Activated CD4-positive, alpha-beta memory T cell treated with anti-CD3 and anti-CD28 coated beads for 36 hours (primary cell): ENCODE measurements at regions of chr2 and their contacts with region 1.

Region 1: GRCh38 chr2:159712143-159712928 is at the start of gene MARCHF7:
- DNase-seq: peak; percentile 98
- H3K4me3 Mint-ChIP-seq: peak within 1 kb of the TSS; percentile 100
- H3K27ac Mint-ChIP-seq: peak within 1 kb of the TSS; percentile 100
- H3K4me1 Mint-ChIP-seq: peaks cover 47% of the 10 kb centered on the region
- H3K27me3 Mint-ChIP-seq: no peaks in the 10 kb centered on the region
- total RNA-seq, gene MARCHF7: 84.0 to 86.7 TPM

Region 2: DNA sequence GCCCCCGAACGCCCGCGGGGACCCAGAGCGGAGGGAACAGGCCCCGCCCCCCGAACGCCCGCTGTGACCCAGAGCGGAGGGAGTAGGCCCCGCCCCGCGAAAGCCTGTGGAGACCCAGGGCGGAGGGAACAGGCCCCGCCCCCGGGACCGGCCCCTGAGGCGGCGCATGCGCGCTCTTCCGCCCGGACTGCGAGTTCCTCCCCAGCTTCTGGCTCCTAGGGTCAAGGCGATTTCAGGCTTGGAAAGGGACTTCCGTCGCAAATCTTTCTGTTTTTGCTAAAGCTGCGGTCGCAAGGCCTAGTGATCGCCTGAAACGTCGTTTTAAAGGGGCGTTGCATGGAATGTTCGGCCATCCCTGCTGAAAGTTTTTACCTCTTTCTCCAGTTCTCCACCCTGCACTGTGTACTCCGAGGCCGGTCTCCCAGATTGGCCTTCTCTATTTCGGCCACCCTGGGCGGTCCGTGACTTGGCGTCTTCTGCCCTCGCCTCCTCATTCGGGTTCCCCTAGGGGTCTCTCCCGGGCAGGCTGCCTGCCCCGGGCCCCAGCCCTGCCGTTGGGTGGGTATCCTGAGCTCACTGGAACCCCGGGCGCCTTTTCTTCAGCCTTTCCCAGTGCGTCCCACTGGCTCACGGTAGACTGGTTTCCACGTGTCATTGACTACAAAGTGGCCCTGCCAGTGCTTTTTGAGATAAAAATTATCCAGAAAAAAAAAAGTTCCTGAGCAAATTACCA is 425.5 kb before region 1 on chr2:
- CTCF ChIA-PET with region 1: interaction called, 3 read pairs
- POLR2A ChIA-PET with region 1: no interaction called
- intact Hi-C with region 1: loop called (anchors 1 kb)
- DNase-seq: peak; percentile 97
- H3K4me3 Mint-ChIP-seq: peak overlapping the region; percentile 87
- H3K27ac Mint-ChIP-seq: peak overlapping the region; percentile 63
- H3K4me1 Mint-ChIP-seq: peaks cover 20% of the 10 kb centered on the region
- H3K27me3 Mint-ChIP-seq: no peaks in the 10 kb centered on the region

Region 3: DNA sequence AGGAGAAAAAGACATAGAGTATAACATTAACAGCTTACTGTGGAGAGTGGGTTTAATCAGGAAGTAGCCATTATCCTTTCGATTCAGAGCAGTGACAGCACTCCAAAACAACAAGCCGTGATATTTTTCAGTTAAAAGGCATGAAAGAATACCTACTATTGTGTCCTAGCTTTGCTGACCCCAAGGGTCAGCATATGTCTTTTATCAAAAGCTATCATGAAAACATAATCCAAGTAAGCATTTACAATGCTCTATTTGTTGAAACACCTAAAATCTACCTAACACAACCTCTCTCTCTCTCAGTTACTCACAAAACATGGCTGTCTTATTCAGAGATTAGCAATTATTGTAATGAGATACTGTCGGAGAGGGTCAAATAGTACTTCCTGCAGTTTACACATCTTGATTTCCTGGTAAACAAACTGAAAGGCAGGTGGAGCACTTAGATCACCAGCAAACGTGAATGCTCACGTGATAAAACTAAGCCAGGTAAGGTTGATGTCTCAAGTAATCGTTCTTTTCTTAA is 196.0 kb before region 1 on chr2:
- CTCF ChIA-PET with region 1: interaction called, 4 read pairs
- POLR2A ChIA-PET with region 1: interaction called, 3 read pairs
- intact Hi-C with region 1: loop called (anchors 1 kb)
- DNase-seq: no peak
- H3K4me3 Mint-ChIP-seq: peak overlapping the region; percentile 69
- H3K27ac Mint-ChIP-seq: peak overlapping the region; percentile 59
- H3K4me1 Mint-ChIP-seq: peaks cover 27% of the 10 kb centered on the region
- H3K27me3 Mint-ChIP-seq: no peaks in the 10 kb centered on the region

Region 4: DNA sequence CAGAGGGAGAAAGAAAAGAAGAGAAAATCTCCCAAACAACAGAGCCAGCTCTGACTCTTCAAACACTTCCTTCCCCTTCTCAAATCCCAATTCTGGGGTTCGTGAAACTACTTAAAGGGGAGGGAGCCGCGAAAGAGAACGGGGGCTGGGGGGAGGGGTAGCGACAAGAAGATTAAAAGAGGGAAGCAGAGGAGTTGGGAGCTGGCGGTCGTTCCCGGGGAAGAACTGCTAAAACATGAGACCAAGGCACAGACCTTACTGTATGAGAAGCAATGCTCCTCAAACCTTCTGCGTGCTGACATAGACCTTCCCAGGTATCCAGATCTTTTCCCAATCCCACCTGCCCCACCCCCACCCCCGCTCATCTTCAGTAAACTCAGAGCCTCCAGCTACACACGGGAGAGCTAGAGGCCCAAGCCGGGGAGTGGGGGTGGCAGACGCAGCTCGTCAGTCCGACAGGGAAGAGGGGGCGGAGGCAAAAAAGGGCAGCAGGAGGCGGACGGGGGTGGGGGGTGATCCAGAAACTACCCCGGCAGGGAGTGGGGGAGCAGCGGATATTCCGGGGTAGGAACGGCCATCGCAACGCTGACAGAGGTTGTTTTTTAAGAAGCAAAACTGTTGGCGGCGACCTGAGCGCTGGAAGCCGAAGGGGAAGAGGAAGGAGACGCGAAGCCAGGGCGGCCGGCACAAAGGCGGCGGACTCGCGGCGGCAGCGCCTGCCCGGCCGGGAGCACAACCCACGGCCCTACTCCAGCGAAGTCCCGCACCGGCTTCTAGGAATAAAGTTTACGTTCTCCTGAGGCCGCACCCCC is 97.0 kb before region 1 on chr2:
- CTCF ChIA-PET with region 1: no interaction called
- POLR2A ChIA-PET with region 1: interaction called, 3 read pairs
- intact Hi-C with region 1: loop called (anchors 5 kb)
- DNase-seq: peak; percentile 50
- H3K4me3 Mint-ChIP-seq: peak overlapping the region; percentile 82
- H3K27ac Mint-ChIP-seq: no peak overlapping the region
- H3K4me1 Mint-ChIP-seq: peaks cover 8% of the 10 kb centered on the region
- H3K27me3 Mint-ChIP-seq: peaks cover 18% of the 10 kb centered on the region

Region 5: GRCh38 chr2:159661286-159661685 is 51.0 kb before region 1 on chr2:
- CTCF ChIA-PET with region 1: no interaction called
- POLR2A ChIA-PET with region 1: no interaction called
- intact Hi-C with region 1: no loop called
- DNase-seq: no peak
- H3K4me3 Mint-ChIP-seq: no peak overlapping the region
- H3K27ac Mint-ChIP-seq: no peak overlapping the region
- H3K4me1 Mint-ChIP-seq: no peaks in the 10 kb centered on the region
- H3K27me3 Mint-ChIP-seq: no peaks in the 10 kb centered on the region

Region 6: GRCh38 chr2:159755788-159756187 is 43.5 kb after region 1 on chr2:
- CTCF ChIA-PET with region 1: interaction called, 3 read pairs
- POLR2A ChIA-PET with region 1: interaction called, 4 read pairs
- intact Hi-C with region 1: loop called (anchors 1 kb)
- DNase-seq: peak; percentile 22
- H3K4me3 Mint-ChIP-seq: no peak overlapping the region
- H3K27ac Mint-ChIP-seq: no peak overlapping the region
- H3K4me1 Mint-ChIP-seq: peaks cover 8% of the 10 kb centered on the region
- H3K27me3 Mint-ChIP-seq: no peaks in the 10 kb centered on the region

Region 7: GRCh38 chr2:159769147-159769546 is 56.8 kb after region 1 on chr2:
- CTCF ChIA-PET with region 1: no interaction called
- POLR2A ChIA-PET with region 1: no interaction called
- intact Hi-C with region 1: no loop called
- DNase-seq: no peak
- H3K4me3 Mint-ChIP-seq: no peak overlapping the region
- H3K27ac Mint-ChIP-seq: no peak overlapping the region
- H3K4me1 Mint-ChIP-seq: peaks cover 3% of the 10 kb centered on the region
- H3K27me3 Mint-ChIP-seq: no peaks in the 10 kb centered on the region

Region 8: DNA sequence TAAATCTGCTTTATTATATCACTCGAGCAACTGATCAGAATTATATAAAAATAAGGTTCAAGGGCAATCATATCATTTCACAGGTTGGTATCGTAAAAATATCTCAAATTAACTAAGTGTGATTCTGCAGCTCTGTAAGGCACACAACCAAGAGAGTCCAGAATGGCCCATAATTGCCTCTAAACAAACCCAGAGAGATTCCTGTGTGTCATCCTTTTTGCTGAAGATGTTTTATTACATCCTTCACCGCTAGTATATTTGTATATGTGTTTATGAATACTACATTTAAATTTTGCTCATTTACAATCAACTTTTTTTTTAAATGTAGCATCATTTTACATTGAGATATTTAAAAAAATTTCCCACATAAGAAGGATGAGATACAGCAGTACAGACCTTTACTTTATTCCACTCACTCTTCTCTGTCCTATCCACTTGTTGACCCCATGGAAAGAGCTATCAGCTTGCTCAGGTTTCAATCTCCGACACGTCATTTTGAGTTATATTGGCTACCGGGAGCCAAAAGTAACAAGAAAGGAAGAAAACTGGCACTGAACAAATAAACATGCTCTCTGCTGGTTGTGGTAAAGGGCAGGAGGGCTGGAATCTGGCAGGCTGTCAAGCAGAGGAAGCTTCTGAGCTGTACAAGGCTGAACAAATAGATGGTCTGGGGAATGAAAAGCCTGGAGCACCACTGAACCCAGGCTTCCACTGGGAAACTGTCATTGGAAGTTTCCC is 327.0 kb after region 1 on chr2:
- CTCF ChIA-PET with region 1: no interaction called
- POLR2A ChIA-PET with region 1: no interaction called
- intact Hi-C with region 1: no loop called
- DNase-seq: no peak
- H3K4me3 Mint-ChIP-seq: no peak overlapping the region
- H3K27ac Mint-ChIP-seq: no peak overlapping the region
- H3K4me1 Mint-ChIP-seq: peaks cover 15% of the 10 kb centered on the region
- H3K27me3 Mint-ChIP-seq: peaks cover 10% of the 10 kb centered on the region